Transverse colon (tissue), 4 donors: ENCODE measurements at regions of chr1 and their contacts with region 1.

Region 1: GRCh38 chr1:68103884-68104554 is 53.6 kb upstream of the DIRAS3 start:
- DNase-seq: no peak
- H3K4me3 ChIP-seq: no peak overlapping the region
- H3K27ac ChIP-seq: no peak overlapping the region
- H3K4me1 ChIP-seq: peaks cover 0 to 31% (median 19%) of the 10 kb centered on the region in 4 donors
- H3K27me3 ChIP-seq: no peaks in the 10 kb centered on the region
- CTCF ChIP-seq: no peak
- EP300 ChIP-seq: no peak
- POLR2A ChIP-seq: no peak

Region 2: GRCh38 chr1:67861856-67862516 is 242.0 kb before region 1 on chr1:
- in situ Hi-C with region 1: loop called in 2 of 4 experiments (anchors 5 to 10 kb)
- intact Hi-C with region 1: no loop called
- DNase-seq: no peak
- H3K4me3 ChIP-seq: no peak overlapping the region
- H3K27ac ChIP-seq: no peak overlapping the region
- H3K4me1 ChIP-seq: no peaks in the 10 kb centered on the region
- H3K27me3 ChIP-seq: no peaks in the 10 kb centered on the region
- CTCF ChIP-seq: no peak
- EP300 ChIP-seq: no peak
- POLR2A ChIP-seq: no peak